ENCODE measurements at regions of chr6 and their contacts with region 1.

Region 1: DNA sequence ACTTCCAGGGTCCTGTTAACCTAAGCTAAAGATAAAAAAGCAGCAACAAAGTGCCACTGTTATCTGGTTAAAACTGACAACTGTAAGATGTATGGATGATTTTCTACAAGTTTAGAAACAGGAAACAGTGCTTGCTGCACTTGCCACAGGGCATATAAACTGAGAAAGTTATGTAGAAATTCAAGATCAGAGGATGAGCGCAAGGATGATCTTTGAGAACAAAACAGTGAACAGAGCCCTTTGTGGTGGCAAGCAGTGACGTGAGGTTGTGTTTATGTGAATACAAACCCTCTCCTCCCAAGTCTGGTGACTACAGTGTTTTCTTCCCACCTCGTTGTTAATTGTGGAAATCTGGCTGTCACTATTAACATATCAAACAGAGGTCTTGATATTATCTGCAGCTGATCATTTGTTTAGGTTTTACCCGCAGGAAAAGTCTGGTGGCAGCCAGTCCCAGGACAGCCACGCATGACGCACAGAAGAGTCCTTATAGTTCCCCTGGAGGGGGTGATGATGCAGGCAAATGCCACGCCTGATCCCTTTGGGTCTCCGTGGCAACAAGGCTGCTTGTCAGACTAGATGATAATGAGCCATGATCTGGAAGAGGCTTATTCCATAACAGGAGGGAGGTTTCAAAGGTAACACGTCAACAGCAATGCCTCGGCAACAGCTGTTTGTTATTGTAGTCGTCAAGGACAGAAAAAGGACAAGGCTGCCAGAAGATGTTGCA is 43.1 kb upstream of the TNFAIP3 start:
- DNase-seq: peak; percentile 64
- ATAC-seq: peak; percentile 69
- H3K4me3 Mint-ChIP-seq: peak overlapping the region; percentile 77
- H3K27ac Mint-ChIP-seq: peak overlapping the region; percentile 95
- H3K4me1 Mint-ChIP-seq: peaks cover 61% of the 10 kb centered on the region
- H3K27me3 Mint-ChIP-seq: no peaks in the 10 kb centered on the region

Region 2: DNA sequence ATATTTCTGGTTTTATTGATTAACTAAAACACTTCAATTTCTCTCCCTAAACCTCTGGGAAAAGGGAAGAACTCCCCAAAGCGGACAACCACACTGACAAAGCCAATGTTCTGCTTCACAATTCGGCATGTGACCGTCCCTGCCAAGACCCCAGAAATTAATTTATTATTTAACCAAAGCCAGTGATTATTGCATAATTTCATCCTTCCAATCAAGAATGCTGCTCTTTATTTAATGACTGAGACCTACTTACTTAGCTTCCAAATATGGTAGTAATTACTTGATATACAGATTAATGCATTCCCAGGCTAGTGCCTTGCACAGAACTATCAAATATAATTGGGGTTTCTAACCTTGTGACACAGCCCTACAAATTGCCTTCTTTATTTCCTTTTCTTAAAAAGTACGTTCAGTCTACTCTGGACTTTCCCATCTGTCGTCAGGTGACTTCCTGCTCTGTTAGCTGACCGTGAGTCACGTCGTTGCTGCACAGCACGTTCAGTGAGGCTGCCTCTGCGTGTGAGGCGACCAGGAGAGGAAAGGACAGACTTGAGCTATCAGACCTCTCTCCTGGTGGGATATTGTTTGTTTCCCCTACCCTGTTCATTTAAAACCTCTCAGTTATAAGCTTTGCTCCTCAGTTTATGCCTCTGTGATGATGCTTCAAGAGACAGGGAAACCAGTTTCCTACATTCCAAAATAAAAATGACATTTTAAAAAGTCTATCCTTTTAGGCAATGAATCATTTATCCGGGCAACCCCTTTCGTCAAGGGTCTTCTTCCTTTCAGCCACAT is 12.7 kb before region 1 on chr6:
- POLR2A ChIA-PET with region 1: interaction called, 18 read pairs
- DNase-seq: peak; percentile 64
- ATAC-seq: peak; percentile 97
- H3K4me3 Mint-ChIP-seq: peak overlapping the region; percentile 32
- H3K27ac Mint-ChIP-seq: peak overlapping the region; percentile 80
- H3K4me1 Mint-ChIP-seq: peaks cover 34% of the 10 kb centered on the region
- H3K27me3 Mint-ChIP-seq: no peaks in the 10 kb centered on the region

Measured in activated naive CD8-positive, alpha-beta T cell treated with anti-CD3 and anti-CD28 coated beads, Interleukin-2, amount 10 ng/mL, durations not matched to agents 7 days and 5 days (primary cell).